ENCODE measurements at regions of chr1 and their contacts with region 1.

Region 1: GRCh38 chr1:207831517-207832327 is 79.2 kb downstream of the CD34 start:
- DNase-seq: no peak
- ATAC-seq: no peak
- H3K4me3 ChIP-seq: no peak overlapping the region
- H3K27ac ChIP-seq: no peak overlapping the region
- H3K4me1 ChIP-seq: peaks cover 0 to 24% (median 10%) of the 10 kb centered on the region in 4 donors
- H3K27me3 ChIP-seq: no peaks in the 10 kb centered on the region
- CTCF ChIP-seq: no peak
- POLR2A ChIP-seq: no peak

Region 2: DNA sequence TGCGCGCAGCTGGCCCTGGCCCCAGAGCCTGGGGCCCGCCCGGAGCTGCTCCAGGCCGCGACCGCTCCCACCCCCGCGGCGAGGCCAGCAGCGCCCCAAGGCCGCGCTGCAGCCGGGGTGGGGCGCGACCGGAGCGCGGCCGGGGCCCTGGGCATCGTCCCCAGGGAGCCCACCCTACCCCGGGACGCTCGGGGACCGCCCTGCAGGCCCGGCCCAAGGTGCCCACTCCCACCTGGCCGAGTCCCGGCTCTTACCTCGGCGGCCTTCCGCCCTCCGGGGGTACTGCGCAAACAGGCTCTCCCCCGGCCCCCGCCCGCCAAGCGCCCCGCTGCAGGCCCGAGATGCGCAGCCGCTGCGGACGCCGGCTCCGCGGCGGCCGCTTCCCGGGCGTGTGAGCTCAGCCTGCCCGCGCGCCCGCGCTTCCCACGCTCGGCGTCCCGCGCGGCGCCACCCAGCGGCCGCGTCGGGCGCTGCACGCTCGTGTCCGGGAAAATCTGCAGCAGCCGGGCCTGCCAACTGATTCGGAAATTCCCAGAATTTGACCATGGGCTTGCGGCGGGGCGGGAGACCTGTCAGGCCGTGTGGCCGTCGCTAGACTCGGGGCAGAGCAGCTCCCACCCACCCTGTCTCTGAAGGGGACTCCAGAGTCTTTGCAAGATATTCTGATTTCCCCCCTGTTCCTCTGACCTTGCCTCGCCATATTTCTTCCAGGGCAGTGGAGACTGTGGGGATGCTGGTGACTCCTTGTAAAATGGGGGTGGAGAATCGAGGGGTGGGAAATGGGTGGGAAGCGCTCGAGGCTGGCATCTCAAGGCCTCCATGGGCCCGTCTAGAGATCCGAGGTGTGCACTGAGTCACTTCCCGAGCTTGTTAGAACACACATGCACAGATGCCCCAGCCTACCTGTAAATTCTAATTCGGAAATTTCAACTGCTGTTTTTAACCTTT is 37.3 kb after region 1 on chr1:
- intact Hi-C with region 1: loop called (anchors 5 kb)
- DNase-seq: peak; percentile 79 to 85 (median 80)
- ATAC-seq: peak; percentile 80 to 89 (median 87)
- H3K4me3 ChIP-seq: peak overlapping the region; percentile 57 to 75 (median 74)
- H3K27ac ChIP-seq: peak overlapping the region; percentile 82 to 93 (median 84)
- H3K4me1 ChIP-seq: peaks cover 0 to 3% (median 0%) of the 10 kb centered on the region in 4 donors
- H3K27me3 ChIP-seq: no peaks in the 10 kb centered on the region
- CTCF ChIP-seq: peak; percentile 78 to 99 (median 88)
- POLR2A ChIP-seq: peak; percentile 69

Region 3: GRCh38 chr1:207910591-207911354 is 79.1 kb after region 1 on chr1 and contains the start of gene CD34:
- intact Hi-C with region 1: no loop called
- DNase-seq: no peak
- ATAC-seq: peak; percentile 33 to 52 (median 49)
- H3K4me3 ChIP-seq: peak within 1 kb of the TSS in 1 of 3 donors; percentile 16
- H3K27ac ChIP-seq: no peak within 1 kb of the TSS
- H3K4me1 ChIP-seq: no peaks in the 10 kb centered on the region
- H3K27me3 ChIP-seq: no peaks in the 10 kb centered on the region
- CTCF ChIP-seq: no peak
- POLR2A ChIP-seq: no peak
- total RNA-seq, gene CD34: 0.70 to 2.7 (median 2.2) TPM

Region 4: GRCh38 chr1:207925210-207925609 is 93.5 kb after region 1 on chr1:
- intact Hi-C with region 1: no loop called
- DNase-seq: no peak
- ATAC-seq: peak; percentile 17 to 43 (median 20)
- H3K4me3 ChIP-seq: no peak overlapping the region
- H3K27ac ChIP-seq: no peak overlapping the region
- H3K4me1 ChIP-seq: no peaks in the 10 kb centered on the region
- H3K27me3 ChIP-seq: no peaks in the 10 kb centered on the region
- CTCF ChIP-seq: no peak
- POLR2A ChIP-seq: no peak

Region 5: DNA sequence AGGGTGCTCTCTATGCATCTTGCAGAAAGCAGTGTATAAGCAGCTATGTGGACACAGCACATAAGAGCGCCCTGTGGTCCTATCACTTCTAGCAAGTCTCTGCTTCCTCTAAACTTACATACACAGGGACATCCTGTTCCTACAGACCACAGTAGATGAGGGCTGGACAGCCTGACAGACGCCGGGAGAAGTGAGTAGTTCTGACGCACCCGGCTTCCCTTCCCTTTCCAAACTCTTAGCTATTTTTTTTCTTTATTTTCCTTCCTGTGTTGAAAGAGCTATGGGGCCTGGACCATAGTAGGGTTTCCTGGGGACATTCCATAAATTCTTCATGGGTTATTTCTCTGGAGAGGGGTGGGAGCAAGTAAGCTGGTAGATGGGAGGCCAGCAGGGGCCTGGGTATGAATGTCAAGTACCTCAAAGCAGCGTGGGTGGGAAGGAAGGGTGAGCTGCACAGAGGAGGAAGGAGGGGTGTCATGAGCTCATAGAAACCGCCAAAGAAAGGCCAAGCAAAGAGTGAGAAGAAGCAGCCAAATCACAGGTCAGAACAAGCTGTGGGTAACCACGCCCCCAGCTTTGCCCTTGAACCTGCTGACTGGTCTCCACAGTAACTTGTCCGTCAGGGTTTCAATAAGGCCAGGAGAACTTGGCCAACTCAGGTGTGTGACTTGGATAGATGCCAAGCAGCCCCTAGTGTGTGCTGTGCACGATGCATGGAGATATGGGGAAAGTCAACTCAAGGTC is 375.8 kb after region 1 on chr1:
- intact Hi-C with region 1: no loop called
- DNase-seq: peak; percentile 39 to 75 (median 73)
- ATAC-seq: peak; percentile 54 to 84 (median 76)
- H3K4me3 ChIP-seq: no peak overlapping the region
- H3K27ac ChIP-seq: peak overlapping the region; percentile 8 to 23 (median 20)
- H3K4me1 ChIP-seq: peaks cover 0 to 31% (median 12%) of the 10 kb centered on the region in 4 donors
- H3K27me3 ChIP-seq: no peaks in the 10 kb centered on the region
- CTCF ChIP-seq: no peak
- POLR2A ChIP-seq: no peak